CD4-positive, alpha-beta T cell (primary cell): ENCODE measurements at regions of chr19 and their contacts with region 1.

Region 1: GRCh38 chr19:35995048-35995993 is at the start of gene SDHAF1:
- DNase-seq: peak; percentile 81 to 96 (median 91)
- ATAC-seq: peak; percentile 90
- H3K4me3 ChIP-seq: peak within 1 kb of the TSS; percentile 83
- H3K4me3 Mint-ChIP-seq: peak within 1 kb of the TSS; percentile 95
- H3K27ac ChIP-seq: peak within 1 kb of the TSS; percentile 56 to 63
- H3K27ac Mint-ChIP-seq: peak within 1 kb of the TSS; percentile 83
- H3K4me1 ChIP-seq: peaks cover 45% of the 10 kb centered on the region
- H3K4me1 Mint-ChIP-seq: peaks cover 41% of the 10 kb centered on the region
- H3K27me3 ChIP-seq: no peaks in the 10 kb centered on the region
- H3K27me3 Mint-ChIP-seq: no peaks in the 10 kb centered on the region
- CTCF ChIP-seq: no peak
- total RNA-seq, gene SDHAF1: 4.3 to 5.4 TPM

Region 2: DNA sequence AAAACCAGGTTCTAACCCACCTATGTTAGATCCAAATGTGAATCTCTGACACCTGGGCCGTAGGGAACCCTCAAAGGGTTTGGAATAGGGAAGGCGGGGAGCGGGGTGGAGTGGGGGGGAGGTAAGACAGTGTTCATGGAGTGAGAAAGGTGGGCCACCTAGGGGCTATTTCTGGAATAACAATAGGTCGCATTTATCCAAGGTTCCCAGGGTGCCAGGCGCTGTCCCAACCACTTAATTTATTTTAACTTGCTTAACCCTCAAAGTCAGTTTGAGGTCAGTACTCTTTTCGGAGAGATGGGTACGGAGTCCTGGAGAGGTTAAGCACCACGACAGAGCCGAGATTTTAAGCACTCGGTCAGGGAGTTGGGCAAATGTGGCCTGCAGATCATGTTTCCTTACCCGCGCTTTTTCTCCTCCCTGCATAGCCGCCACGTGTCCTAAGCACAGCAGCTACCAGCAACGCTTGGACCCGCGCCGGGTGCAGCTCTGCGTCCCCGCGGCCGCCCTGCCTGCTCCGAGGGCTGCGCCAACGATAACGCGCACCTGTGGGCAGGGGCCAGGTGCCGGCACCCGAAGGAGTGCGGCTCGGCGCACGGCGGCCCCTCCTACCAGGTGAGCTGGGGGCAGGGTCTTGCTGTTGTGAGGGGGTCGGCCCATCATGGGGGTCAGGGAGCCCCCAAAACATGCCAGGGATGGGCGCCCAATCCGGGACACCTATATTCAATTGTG is 904.6 kb before region 1 on chr19:
- CTCF ChIA-PET with region 1: no interaction called
- POLR2A ChIA-PET with region 1: no interaction called
- intact Hi-C with region 1: no loop called
- DNase-seq: peak in 11 of 14 experiments; percentile 5 to 70 (median 23)
- ATAC-seq: peak; percentile 80
- H3K4me3 ChIP-seq: no peak overlapping the region
- H3K4me3 Mint-ChIP-seq: no peak overlapping the region
- H3K27ac ChIP-seq: no peak overlapping the region
- H3K27ac Mint-ChIP-seq: no peak overlapping the region
- H3K4me1 ChIP-seq: peaks cover 11% of the 10 kb centered on the region
- H3K4me1 Mint-ChIP-seq: peaks cover 5% of the 10 kb centered on the region
- H3K27me3 ChIP-seq: peaks cover 10 to 11% of the 10 kb centered on the region in 2 experiments
- H3K27me3 Mint-ChIP-seq: peaks cover 12% of the 10 kb centered on the region
- CTCF ChIP-seq: peak; percentile 78

Region 3: DNA sequence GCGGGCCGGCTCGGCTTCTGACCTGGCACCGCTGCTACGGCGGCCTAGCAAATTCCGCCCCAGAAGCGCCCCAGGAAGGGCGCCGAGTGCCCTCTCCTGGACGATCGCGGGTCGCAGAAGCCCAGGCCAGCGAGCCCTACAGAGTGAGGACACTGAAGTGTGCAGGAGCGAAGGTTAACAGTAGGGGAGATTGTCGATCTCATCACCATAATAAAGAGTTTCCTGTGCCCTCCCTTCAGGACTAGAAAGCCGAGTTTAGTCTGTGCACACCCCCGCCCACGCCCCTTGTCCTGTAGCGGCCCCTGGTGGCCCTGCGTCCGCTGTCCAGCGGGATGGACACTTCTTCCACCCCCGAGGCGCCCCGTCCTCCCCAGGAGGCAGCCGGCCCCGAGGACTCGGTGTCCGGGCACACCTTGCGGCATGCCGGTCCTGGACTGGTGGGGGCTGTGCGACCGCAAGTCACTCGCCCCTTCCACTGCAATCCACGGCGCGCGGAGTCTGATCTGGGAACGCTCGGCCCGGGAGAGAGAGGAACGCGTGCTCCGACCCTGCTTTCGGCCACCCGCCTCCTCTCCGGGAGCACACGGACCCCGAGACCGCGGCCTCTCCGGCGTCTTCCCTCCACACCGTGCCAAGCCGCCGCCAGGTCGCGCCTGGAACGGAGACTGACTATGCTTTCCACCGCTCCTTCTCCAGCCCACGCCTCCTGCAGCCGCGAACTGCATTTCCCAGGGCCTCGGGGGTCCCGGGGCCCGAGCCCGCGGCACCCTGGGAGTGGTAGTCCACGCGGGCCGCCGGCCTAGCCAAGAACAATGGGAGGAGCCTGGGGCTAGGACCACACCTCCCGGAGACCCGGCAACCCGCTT is 278.3 kb before region 1 on chr19:
- CTCF ChIA-PET with region 1: no interaction called
- POLR2A ChIA-PET with region 1: no interaction called
- intact Hi-C with region 1: no loop called
- DNase-seq: peak; percentile 92 to 99 (median 96)
- ATAC-seq: peak; percentile 85
- H3K4me3 ChIP-seq: peak overlapping the region; percentile 96
- H3K4me3 Mint-ChIP-seq: peak overlapping the region; percentile 93
- H3K27ac ChIP-seq: peak overlapping the region; percentile 73 to 76
- H3K27ac Mint-ChIP-seq: peak overlapping the region; percentile 89
- H3K4me1 ChIP-seq: peaks cover 71% of the 10 kb centered on the region
- H3K4me1 Mint-ChIP-seq: peaks cover 70% of the 10 kb centered on the region
- H3K27me3 ChIP-seq: no peaks in the 10 kb centered on the region
- H3K27me3 Mint-ChIP-seq: no peaks in the 10 kb centered on the region
- CTCF ChIP-seq: peak; percentile 95

Region 4: GRCh38 chr19:35949131-35949530 is 46.2 kb before region 1 on chr19:
- CTCF ChIA-PET with region 1: no interaction called
- POLR2A ChIA-PET with region 1: interaction called, 13 read pairs
- intact Hi-C with region 1: no loop called
- DNase-seq: no peak
- ATAC-seq: no peak
- H3K4me3 ChIP-seq: no peak overlapping the region
- H3K4me3 Mint-ChIP-seq: peak overlapping the region; percentile 10
- H3K27ac ChIP-seq: no peak overlapping the region
- H3K27ac Mint-ChIP-seq: peak overlapping the region; percentile 82
- H3K4me1 ChIP-seq: peaks cover 46% of the 10 kb centered on the region
- H3K4me1 Mint-ChIP-seq: peaks cover 63% of the 10 kb centered on the region
- H3K27me3 ChIP-seq: no peaks in the 10 kb centered on the region
- H3K27me3 Mint-ChIP-seq: no peaks in the 10 kb centered on the region
- CTCF ChIP-seq: no peak

Region 5: DNA sequence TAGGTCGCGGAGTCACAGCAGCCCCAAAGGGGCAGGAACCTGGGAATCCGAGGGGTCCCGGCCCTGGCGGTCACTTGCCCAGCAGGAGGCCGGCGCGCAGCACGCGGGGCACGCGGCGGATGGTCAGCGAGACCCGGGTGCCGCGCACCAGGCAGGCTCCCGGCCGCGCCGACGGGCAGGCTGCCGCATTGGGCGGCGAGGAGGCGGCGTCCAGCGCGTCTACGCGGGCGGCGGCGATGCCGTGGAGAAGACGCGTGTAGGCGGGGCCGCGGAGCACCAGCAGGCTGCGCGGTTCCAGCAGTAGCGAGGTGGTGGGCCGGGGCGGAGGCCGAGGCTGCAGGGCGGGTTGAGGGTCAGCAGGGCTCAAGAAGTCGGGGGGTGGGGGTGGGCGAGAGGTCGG is 13.9 kb after region 1 on chr19:
- CTCF ChIA-PET with region 1: interaction called, 3 read pairs
- POLR2A ChIA-PET with region 1: interaction called, 17 read pairs
- intact Hi-C with region 1: loop called in 1 of 2 experiments (anchors 1 kb)
- DNase-seq: peak in 12 of 14 experiments; percentile 16 to 70 (median 42)
- ATAC-seq: no peak
- H3K4me3 ChIP-seq: peak overlapping the region; percentile 31
- H3K4me3 Mint-ChIP-seq: peak overlapping the region; percentile 63
- H3K27ac ChIP-seq: no peak overlapping the region
- H3K27ac Mint-ChIP-seq: no peak overlapping the region
- H3K4me1 ChIP-seq: peaks cover 34% of the 10 kb centered on the region
- H3K4me1 Mint-ChIP-seq: peaks cover 28% of the 10 kb centered on the region
- H3K27me3 ChIP-seq: no peaks in the 10 kb centered on the region
- H3K27me3 Mint-ChIP-seq: no peaks in the 10 kb centered on the region
- CTCF ChIP-seq: no peak

Region 6: GRCh38 chr19:36014029-36014924 is 19.0 kb after region 1 on chr19 and contains the start of gene ALKBH6:
- CTCF ChIA-PET with region 1: interaction called, 3 read pairs
- POLR2A ChIA-PET with region 1: interaction called, 17 read pairs
- intact Hi-C with region 1: loop called in 1 of 2 experiments (anchors 1 kb)
- DNase-seq: peak; percentile 97 to 100 (median 99)
- ATAC-seq: peak; percentile 98
- H3K4me3 ChIP-seq: peak within 1 kb of the TSS; percentile 88
- H3K4me3 Mint-ChIP-seq: peak within 1 kb of the TSS; percentile 99
- H3K27ac ChIP-seq: peak within 1 kb of the TSS; percentile 75 to 89
- H3K27ac Mint-ChIP-seq: peak within 1 kb of the TSS; percentile 94
- H3K4me1 ChIP-seq: peaks cover 32% of the 10 kb centered on the region
- H3K4me1 Mint-ChIP-seq: peaks cover 46% of the 10 kb centered on the region
- H3K27me3 ChIP-seq: no peaks in the 10 kb centered on the region
- H3K27me3 Mint-ChIP-seq: no peaks in the 10 kb centered on the region
- CTCF ChIP-seq: no peak
- total RNA-seq, gene ALKBH6: 38.1 to 41.8 TPM